ENCODE measurements at regions of chr11 and their contacts with region 1.

Region 1: GRCh38 chr11:64317957-64318693 is at the start of gene PRDX5:
- DNase-seq: peak; percentile 95
- H3K4me3 ChIP-seq: peak within 1 kb of the TSS; percentile 77 to 91 (median 79)
- H3K27ac ChIP-seq: peak within 1 kb of the TSS; percentile 95
- H3K4me1 ChIP-seq: peaks cover 41% of the 10 kb centered on the region
- H3K27me3 ChIP-seq: no peaks in the 10 kb centered on the region
- CTCF ChIP-seq: peak; percentile 5 to 62
- total RNA-seq, gene PRDX5: 333 to 449 TPM

Region 2: DNA sequence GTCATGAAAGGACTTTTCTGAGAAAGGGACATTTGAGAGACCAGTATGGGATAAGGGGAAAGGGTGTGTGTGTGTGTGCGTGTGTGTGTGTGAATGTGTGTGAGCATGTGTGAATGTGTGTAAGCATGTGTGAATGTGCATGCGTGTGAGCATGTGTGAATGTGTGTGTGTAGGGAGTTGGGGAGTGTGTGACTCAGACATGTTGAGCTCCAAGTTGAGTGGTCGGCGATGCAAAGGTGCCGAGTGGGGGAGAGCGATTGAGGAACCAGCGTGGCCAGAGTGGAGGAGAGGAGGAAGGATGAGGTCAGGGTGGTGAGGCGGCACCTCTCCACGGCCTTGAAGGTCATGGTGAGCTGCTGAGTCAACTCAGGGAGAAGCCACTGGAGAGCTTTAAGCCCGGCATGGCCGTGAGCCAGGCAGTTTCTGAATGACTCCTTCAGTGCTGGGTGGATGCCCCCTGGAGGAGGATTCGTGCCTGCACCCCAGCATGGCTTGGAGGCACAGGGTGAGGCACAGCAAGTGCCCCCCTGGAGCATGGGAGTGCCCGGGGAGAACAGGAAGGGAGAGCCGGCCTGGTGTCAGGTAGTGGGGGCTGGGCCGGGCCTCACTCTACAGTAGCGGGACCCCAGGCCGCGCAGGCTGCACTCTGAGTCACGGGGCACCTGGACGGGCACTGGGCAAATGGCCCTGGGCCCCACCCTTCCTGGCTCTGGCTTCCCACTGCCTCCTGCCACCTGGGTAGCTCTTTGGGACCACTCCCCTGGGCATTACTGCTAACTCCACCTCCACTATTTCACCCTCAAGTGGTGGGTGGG is 13.6 kb after region 1 on chr11:
- CTCF ChIA-PET with region 1: interaction called, 36 read pairs
- dilution Hi-C with region 1: no loop called
- in situ Hi-C with region 1: no loop called
- intact Hi-C with region 1: loop called (anchors 1 kb)
- DNase-seq: peak; percentile 89
- H3K4me3 ChIP-seq: no peak overlapping the region
- H3K27ac ChIP-seq: peak overlapping the region; percentile 35
- H3K4me1 ChIP-seq: peaks cover 24% of the 10 kb centered on the region
- H3K27me3 ChIP-seq: no peaks in the 10 kb centered on the region
- CTCF ChIP-seq: peak; percentile 84 to 95

Region 3: GRCh38 chr11:64341851-64342791 is 24.0 kb after region 1 on chr11:
- CTCF ChIA-PET with region 1: interaction called, 25 read pairs
- dilution Hi-C with region 1: no loop called
- in situ Hi-C with region 1: no loop called
- intact Hi-C with region 1: loop called (anchors 1 kb)
- DNase-seq: peak; percentile 91
- H3K4me3 ChIP-seq: peak overlapping the region; percentile 13 to 57 (median 26)
- H3K27ac ChIP-seq: peak overlapping the region; percentile 53
- H3K4me1 ChIP-seq: peaks cover 15% of the 10 kb centered on the region
- H3K27me3 ChIP-seq: no peaks in the 10 kb centered on the region
- CTCF ChIP-seq: peak; percentile 11 to 64

Measured in mammary epithelial cell (primary cell).